Right cardiac atrium (tissue), 5 donors: ENCODE measurements at regions of chr13 and their contacts with region 1.

Region 1: DNA sequence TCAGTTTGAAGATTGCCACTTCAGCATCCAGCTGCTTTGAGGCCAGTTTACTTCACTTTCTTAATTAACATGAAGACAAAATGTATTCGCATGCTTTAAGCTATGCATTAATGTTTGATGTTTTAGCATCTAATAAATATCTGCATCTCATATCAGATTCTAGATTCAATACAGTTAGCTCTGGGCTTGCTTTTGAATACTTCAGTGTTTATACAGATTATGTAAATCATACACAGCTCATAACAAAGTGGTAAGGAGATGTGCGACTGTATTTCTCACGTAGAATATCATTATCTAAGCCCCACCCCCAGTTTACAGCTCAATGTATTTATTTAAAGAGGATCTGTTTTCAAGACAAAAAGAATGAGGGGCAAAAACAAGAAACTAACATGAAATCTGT is 770.5 kb downstream of the PCDH9 start:
- DNase-seq: no peak
- ATAC-seq: no peak
- H3K4me3 ChIP-seq: no peak overlapping the region
- H3K27ac ChIP-seq: no peak overlapping the region
- H3K4me1 ChIP-seq: no peaks in the 10 kb centered on the region
- H3K27me3 ChIP-seq: no peaks in the 10 kb centered on the region

Region 2: GRCh38 chr13:66405908-66406802 is 53.5 kb before region 1 on chr13:
- intact Hi-C with region 1: loop called in 1 of 4 experiments (anchors 10 kb)
- DNase-seq: no peak
- ATAC-seq: no peak
- H3K4me3 ChIP-seq: no peak overlapping the region
- H3K27ac ChIP-seq: no peak overlapping the region
- H3K4me1 ChIP-seq: no peaks in the 10 kb centered on the region
- H3K27me3 ChIP-seq: no peaks in the 10 kb centered on the region